ENCODE measurements at regions of chr6 and their contacts with region 1.

Region 1: GRCh38 chr6:20377623-20378265 is 23.9 kb upstream of the E2F3 start:
- DNase-seq: no peak
- H3K4me3 ChIP-seq: no peak overlapping the region
- H3K4me3 Mint-ChIP-seq: peak overlapping the region in 1 of 7 donors; percentile 27
- H3K27ac ChIP-seq: no peak overlapping the region
- H3K27ac Mint-ChIP-seq: peak overlapping the region in 3 of 8 donors; percentile 5 to 68 (median 17)
- H3K4me1 ChIP-seq: peaks cover 7% of the 10 kb centered on the region
- H3K4me1 Mint-ChIP-seq: peaks cover 14 to 30% (median 27%) of the 10 kb centered on the region in 3 donors
- H3K27me3 ChIP-seq: no peaks in the 10 kb centered on the region
- H3K27me3 Mint-ChIP-seq: no peaks in the 10 kb centered on the region

Region 2: DNA sequence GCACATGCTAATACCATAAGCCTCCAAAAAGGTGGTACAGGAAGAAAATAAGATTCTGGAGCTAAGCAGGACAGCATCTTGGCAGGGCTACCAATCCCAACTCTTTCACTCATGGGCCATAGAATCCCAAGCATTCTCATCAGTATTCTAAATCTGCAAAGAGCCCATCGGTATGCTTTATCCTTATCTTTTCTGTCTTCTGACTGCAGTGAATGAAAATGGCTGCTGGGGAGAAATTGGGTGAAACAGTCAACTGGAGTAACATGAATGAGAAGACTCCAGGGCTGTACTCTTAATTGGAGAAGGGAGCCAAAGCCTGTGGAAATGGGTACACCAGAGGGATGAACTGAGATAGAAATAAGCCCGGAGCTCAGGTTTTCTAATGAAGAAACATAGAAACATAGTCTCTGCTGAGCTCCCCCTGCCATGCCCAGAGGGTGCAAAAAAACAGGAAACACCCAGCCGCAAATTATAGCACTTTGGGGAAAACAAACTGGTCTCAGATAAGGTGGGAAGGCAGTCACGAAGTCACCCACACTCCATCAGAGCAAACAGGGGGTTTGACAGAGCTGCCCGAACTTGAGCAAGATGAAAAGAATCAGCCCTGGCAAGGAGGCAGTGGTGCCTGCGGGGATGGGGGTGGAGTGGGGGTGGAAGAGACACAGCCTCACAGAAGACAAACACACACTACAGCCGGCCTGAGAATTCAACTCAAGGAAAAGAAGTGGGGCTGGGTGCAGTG is 11.5 kb before region 1 on chr6:
- CTCF ChIA-PET with region 1: interaction called, 10 read pairs
- POLR2A ChIA-PET with region 1: interaction called, 4 read pairs
- DNase-seq: peak; percentile 7 to 75 (median 64)
- H3K4me3 ChIP-seq: peak overlapping the region; percentile 25
- H3K4me3 Mint-ChIP-seq: peak overlapping the region; percentile 57 to 84 (median 83)
- H3K27ac ChIP-seq: no peak overlapping the region
- H3K27ac Mint-ChIP-seq: peak overlapping the region; percentile 86 to 96 (median 96)
- H3K4me1 ChIP-seq: peaks cover 63% of the 10 kb centered on the region
- H3K4me1 Mint-ChIP-seq: peaks cover 61 to 69% (median 68%) of the 10 kb centered on the region in 3 donors
- H3K27me3 ChIP-seq: no peaks in the 10 kb centered on the region
- H3K27me3 Mint-ChIP-seq: peaks cover 0 to 2% of the 10 kb centered on the region in 2 donors

Measured in CD8-positive, alpha-beta memory T cell (primary cell).